Activated CD4-positive, alpha-beta T cell treated with anti-CD3 and anti-CD28 coated beads, Interleukin-2, amount 10 ng/mL, durations not matched to agents 24 days and 14 days (primary cell): ENCODE measurements at regions of chr3 and their contacts with region 1.

Region 1: GRCh38 chr3:186108941-186109865 is at the start of gene ETV5:
- DNase-seq: peak; percentile 97
- H3K4me3 Mint-ChIP-seq: peak within 1 kb of the TSS; percentile 89
- H3K27ac Mint-ChIP-seq: peak within 1 kb of the TSS; percentile 63
- H3K4me1 Mint-ChIP-seq: peaks cover 31% of the 10 kb centered on the region
- H3K27me3 Mint-ChIP-seq: peaks cover 76% of the 10 kb centered on the region
- total RNA-seq, gene ETV5: 2.2 and 2.5 TPM in 2 replicates

Region 2: DNA sequence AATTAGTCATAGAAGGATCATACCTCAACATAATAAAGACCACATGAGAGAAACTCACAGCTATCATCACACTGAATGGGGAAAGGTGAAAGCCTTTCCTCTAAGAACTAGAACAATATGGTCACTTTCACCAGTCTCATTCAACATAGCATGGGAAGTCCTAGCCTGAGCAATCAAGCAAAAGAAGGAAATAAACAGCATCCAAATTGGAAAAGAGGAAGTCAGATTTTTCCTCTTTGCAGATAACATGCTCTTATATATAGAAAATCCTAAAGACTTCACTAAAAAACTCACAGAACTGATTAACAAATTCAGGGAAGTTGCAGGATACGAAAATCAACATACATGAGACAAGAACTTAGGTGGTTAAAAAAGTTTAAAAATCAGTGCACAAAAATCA is 721.6 kb before region 1 on chr3:
- intact Hi-C with region 1: no loop called
- DNase-seq: no peak
- H3K4me3 Mint-ChIP-seq: no peak overlapping the region
- H3K27ac Mint-ChIP-seq: no peak overlapping the region
- H3K4me1 Mint-ChIP-seq: no peaks in the 10 kb centered on the region
- H3K27me3 Mint-ChIP-seq: peaks cover 14% of the 10 kb centered on the region

Region 3: GRCh38 chr3:185937689-185938463 is 171.3 kb before region 1 on chr3 and contains the start of gene TRA2B:
- intact Hi-C with region 1: loop called (anchors 2 kb)
- DNase-seq: peak; percentile 100
- H3K4me3 Mint-ChIP-seq: peak within 1 kb of the TSS; percentile 98
- H3K27ac Mint-ChIP-seq: peak within 1 kb of the TSS; percentile 100
- H3K4me1 Mint-ChIP-seq: peaks cover 33% of the 10 kb centered on the region
- H3K27me3 Mint-ChIP-seq: peaks cover 4% of the 10 kb centered on the region
- total RNA-seq, gene TRA2B: 311 and 314 TPM in 2 replicates

Region 4: DNA sequence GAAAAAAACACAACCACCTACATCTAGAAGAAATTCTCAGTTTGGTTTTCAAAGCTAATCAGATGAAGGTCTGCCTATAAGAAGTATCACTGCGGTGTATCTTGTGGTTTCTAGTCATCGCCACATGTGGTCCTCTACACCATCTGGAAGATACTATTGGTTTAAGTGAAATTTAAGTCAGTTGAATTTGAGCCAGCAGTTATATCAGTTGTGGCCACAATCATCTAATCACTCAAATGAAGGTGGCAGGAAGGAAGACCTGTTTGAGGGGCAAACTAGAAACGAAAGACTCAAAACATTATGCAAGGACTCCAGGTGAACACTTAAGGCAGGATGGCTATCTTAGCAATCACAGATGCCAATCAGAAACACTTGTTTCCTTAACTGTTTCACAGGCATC is 49.0 kb before region 1 on chr3:
- intact Hi-C with region 1: loop called (anchors 2 kb)
- DNase-seq: peak; percentile 70
- H3K4me3 Mint-ChIP-seq: no peak overlapping the region
- H3K27ac Mint-ChIP-seq: no peak overlapping the region
- H3K4me1 Mint-ChIP-seq: peaks cover 10% of the 10 kb centered on the region
- H3K27me3 Mint-ChIP-seq: peaks cover 73% of the 10 kb centered on the region

Region 5: DNA sequence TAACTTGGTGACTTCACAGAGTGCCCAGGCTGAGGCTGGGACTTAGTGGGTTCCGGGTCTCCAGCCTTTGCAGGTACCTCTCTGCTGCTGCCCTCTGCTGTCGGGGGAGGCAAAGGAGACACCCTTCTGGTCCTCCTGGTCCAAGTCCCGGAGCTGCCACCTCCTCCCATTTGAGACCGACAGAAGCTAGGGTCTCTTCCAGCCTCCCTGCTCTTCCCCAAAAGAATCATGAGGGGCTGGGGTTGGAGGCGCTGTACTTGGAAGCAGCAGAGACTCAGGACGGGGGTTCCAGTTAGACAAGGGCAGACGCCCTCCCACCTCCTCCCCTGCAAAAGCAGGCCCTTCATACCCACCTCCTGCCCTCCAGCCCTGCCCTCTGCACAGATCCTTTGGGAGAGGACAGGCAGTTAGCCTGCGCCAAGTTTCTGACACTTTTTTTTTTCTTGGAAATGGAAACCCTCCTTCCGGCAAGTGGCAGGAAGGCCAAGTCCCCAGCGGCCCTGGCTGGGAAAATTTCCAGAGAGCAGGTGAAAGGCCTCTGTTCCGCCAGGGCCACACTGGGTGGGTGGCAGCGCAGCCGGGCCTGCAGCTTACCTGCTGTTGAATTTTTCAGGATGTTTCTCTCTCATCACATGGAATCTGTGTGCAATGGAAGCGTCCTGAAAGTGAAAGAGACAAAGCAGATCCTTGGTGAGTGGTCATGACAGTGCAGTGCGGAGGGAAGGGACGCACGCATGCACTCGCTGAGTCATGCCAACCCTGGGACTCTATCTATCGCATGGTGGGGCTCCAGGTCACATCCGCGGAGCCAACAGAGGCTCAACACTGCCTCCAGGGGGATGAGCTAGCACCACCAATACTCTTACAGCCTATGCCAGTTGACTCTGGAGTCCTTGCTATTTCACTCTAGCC is 133.0 kb after region 1 on chr3:
- intact Hi-C with region 1: loop called (anchors 1 kb)
- DNase-seq: peak; percentile 81
- H3K4me3 Mint-ChIP-seq: peak overlapping the region; percentile 47
- H3K27ac Mint-ChIP-seq: no peak overlapping the region
- H3K4me1 Mint-ChIP-seq: peaks cover 12% of the 10 kb centered on the region
- H3K27me3 Mint-ChIP-seq: peaks cover 16% of the 10 kb centered on the region

Region 6: GRCh38 chr3:186307594-186308221 is 198.5 kb after region 1 on chr3:
- intact Hi-C with region 1: no loop called
- DNase-seq: peak; percentile 71
- H3K4me3 Mint-ChIP-seq: no peak overlapping the region
- H3K27ac Mint-ChIP-seq: no peak overlapping the region
- H3K4me1 Mint-ChIP-seq: no peaks in the 10 kb centered on the region
- H3K27me3 Mint-ChIP-seq: no peaks in the 10 kb centered on the region

Region 7: GRCh38 chr3:186570096-186570940 is 461.1 kb after region 1 on chr3 and contains the start of gene DNAJB11:
- intact Hi-C with region 1: loop called (anchors 1 kb)
- DNase-seq: peak; percentile 99
- H3K4me3 Mint-ChIP-seq: peak within 1 kb of the TSS; percentile 90
- H3K27ac Mint-ChIP-seq: peak within 1 kb of the TSS; percentile 99
- H3K4me1 Mint-ChIP-seq: peaks cover 47% of the 10 kb centered on the region
- H3K27me3 Mint-ChIP-seq: no peaks in the 10 kb centered on the region
- total RNA-seq, gene DNAJB11: 74.0 and 77.7 TPM in 2 replicates